Transverse colon (tissue), 4 donors: ENCODE measurements at regions of chr2 and their contacts with region 1.

Region 1: DNA sequence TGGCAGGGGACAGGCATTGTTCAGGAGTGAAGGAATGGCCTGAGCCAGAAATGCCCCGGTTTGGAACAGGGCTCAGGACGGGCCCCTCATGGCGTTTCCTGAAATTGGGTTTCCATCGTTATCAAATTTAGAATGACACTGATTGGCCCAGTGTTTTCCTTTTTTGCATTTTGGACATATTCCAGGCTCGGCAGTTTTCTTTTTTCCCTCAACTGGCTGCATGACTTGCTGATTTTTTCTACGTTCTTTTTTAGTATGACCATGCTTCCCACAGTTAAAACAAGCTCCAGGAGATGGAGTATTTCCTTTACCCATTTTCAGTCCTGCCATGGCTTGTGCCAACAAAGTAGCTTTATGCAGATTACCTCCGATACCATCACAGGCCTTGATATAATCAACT is 20.4 kb upstream of the LYG2 start:
- DNase-seq: no peak
- H3K4me3 ChIP-seq: no peak overlapping the region
- H3K27ac ChIP-seq: no peak overlapping the region
- H3K4me1 ChIP-seq: no peaks in the 10 kb centered on the region
- H3K27me3 ChIP-seq: no peaks in the 10 kb centered on the region
- CTCF ChIP-seq: no peak
- EP300 ChIP-seq: no peak
- POLR2A ChIP-seq: no peak

Region 2: GRCh38 chr2:99141110-99142108 is 134.5 kb before region 1 on chr2 and contains the start of gene C2orf15:
- in situ Hi-C with region 1: no loop called
- intact Hi-C with region 1: no loop called
- DNase-seq: peak; percentile 98
- H3K4me3 ChIP-seq: peak within 1 kb of the TSS; percentile 60 to 96 (median 82)
- H3K27ac ChIP-seq: peak within 1 kb of the TSS; percentile 90 to 97 (median 96)
- H3K4me1 ChIP-seq: peaks cover 6 to 19% (median 12%) of the 10 kb centered on the region in 4 donors
- H3K27me3 ChIP-seq: no peaks in the 10 kb centered on the region
- CTCF ChIP-seq: no peak
- EP300 ChIP-seq: no peak
- POLR2A ChIP-seq: peak; percentile 90
- total RNA-seq, gene C2orf15: 0.82 to 3.7 (median 1.8) TPM in 3 of 4 donors, not detected in the other

Region 3: GRCh38 chr2:99181624-99182000 is 94.3 kb before region 1 on chr2:
- in situ Hi-C with region 1: no loop called
- intact Hi-C with region 1: no loop called
- DNase-seq: no peak
- H3K4me3 ChIP-seq: peak overlapping the region; percentile 57 to 86 (median 67)
- H3K27ac ChIP-seq: peak overlapping the region; percentile 81 to 87 (median 84)
- H3K4me1 ChIP-seq: peaks cover 18 to 39% (median 23%) of the 10 kb centered on the region in 4 donors
- H3K27me3 ChIP-seq: no peaks in the 10 kb centered on the region
- CTCF ChIP-seq: no peak
- EP300 ChIP-seq: no peak
- POLR2A ChIP-seq: no peak

Region 4: DNA sequence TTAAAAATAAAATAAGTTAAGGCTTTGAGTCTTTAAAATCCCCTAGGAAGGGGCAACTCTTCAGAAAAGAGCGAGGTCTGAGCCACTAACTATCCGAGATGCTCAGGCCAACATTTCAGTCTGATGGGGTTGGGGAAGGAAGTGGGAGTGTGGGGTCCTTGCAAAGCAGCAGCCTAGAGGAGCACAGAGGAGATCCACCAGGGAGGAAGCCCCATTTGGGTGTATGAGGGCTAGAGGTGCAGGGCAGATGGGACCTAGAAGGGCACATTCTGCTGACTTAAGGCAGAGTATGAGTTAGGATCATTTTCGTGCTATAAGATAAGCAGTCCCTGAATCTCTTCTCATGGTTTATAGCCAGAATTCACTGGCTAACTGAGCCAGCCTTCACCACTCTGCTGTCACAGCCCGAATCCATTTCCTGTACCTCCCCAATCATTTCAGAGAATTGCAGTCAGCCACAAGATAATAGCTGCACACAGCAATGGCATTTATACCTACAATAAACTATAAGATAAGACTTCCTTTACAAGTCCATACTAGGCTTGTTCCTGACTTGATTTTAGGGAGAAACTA is 57.9 kb before region 1 on chr2:
- in situ Hi-C with region 1: no loop called
- intact Hi-C with region 1: no loop called
- DNase-seq: peak; percentile 27
- H3K4me3 ChIP-seq: no peak overlapping the region
- H3K27ac ChIP-seq: peak overlapping the region in 2 of 4 donors; percentile 0 to 40
- H3K4me1 ChIP-seq: peaks cover 0 to 5% (median 0%) of the 10 kb centered on the region in 4 donors
- H3K27me3 ChIP-seq: no peaks in the 10 kb centered on the region
- CTCF ChIP-seq: no peak
- EP300 ChIP-seq: no peak
- POLR2A ChIP-seq: no peak

Region 5: DNA sequence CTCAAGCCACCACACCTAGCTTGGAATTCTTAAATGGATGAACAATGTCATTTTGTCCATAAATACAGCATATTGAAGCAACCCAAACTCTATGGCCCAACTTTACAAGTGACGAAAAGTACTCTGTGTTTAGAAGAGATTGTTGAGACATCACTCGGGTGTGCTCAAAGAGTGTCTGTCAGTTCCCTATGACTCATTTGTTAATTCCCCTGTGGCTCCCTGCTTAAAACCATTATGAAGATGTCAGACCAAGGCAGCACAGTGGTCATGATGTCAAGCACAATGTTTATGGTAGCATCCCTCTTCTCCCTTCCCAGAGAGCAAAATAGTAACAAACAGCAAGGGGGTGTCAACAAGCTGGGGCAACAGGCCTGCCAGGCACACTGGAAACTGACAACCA is 22.1 kb after region 1 on chr2:
- in situ Hi-C with region 1: no loop called
- intact Hi-C with region 1: loop called (anchors 1 kb)
- DNase-seq: no peak
- H3K4me3 ChIP-seq: no peak overlapping the region
- H3K27ac ChIP-seq: no peak overlapping the region
- H3K4me1 ChIP-seq: no peaks in the 10 kb centered on the region
- H3K27me3 ChIP-seq: no peaks in the 10 kb centered on the region
- CTCF ChIP-seq: no peak
- EP300 ChIP-seq: no peak
- POLR2A ChIP-seq: no peak